CD4-positive, alpha-beta T cell (primary cell): ENCODE measurements at regions of chrX and their contacts with region 1.

Region 1: DNA sequence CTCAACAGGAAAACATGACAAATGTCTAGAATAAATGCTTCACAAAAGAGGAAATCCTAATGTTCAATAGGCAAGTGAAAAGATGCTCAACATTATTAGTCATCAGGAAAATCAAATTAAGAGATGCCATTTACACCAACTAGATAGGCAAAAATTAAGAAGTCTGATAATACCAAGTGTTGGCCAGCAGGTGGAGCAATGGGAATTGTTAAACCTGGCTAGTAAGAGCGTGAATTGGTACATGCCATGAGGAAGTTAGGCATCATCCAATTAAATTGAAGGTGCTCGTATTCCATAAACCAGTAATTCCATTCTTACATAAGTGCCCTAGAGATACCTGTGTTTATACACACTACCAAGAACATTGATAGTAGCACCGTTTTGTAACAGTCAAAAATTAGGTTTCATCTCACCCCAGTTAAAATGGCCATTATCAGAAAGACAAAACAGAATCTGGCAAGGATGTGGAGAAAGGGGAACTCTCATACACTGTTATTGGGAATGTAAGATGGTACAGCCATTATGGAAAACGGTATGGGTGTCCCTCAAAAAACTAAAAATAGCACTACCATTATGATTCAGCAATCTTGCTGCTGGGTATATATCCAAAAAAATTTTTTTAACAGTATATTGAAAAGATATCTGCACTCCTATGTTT is 14.0 kb upstream of the ZCCHC18 start:
- DNase-seq: peak in 12 of 14 experiments; percentile 9 to 83 (median 34)
- ATAC-seq: peak; percentile 69
- H3K4me3 ChIP-seq: no peak overlapping the region
- H3K4me3 Mint-ChIP-seq: no peak overlapping the region
- H3K27ac ChIP-seq: no peak overlapping the region
- H3K27ac Mint-ChIP-seq: no peak overlapping the region
- H3K4me1 ChIP-seq: no peaks in the 10 kb centered on the region
- H3K4me1 Mint-ChIP-seq: peaks cover 4% of the 10 kb centered on the region
- H3K27me3 ChIP-seq: no peaks in the 10 kb centered on the region
- H3K27me3 Mint-ChIP-seq: peaks cover 5% of the 10 kb centered on the region
- CTCF ChIP-seq: peak; percentile 64

Region 2: GRCh38 chrX:103607364-103608305 is 490.6 kb before region 1 on chrX and contains the start of gene TCEAL3:
- CTCF ChIA-PET with region 1: no interaction called
- POLR2A ChIA-PET with region 1: no interaction called
- intact Hi-C with region 1: no loop called
- DNase-seq: peak in 9 of 14 experiments; percentile 8 to 72 (median 37)
- ATAC-seq: peak; percentile 71
- H3K4me3 ChIP-seq: peak within 1 kb of the TSS; percentile 77
- H3K4me3 Mint-ChIP-seq: peak within 1 kb of the TSS; percentile 87
- H3K27ac ChIP-seq: peak within 1 kb of the TSS in 1 of 2 donors; percentile 40
- H3K27ac Mint-ChIP-seq: peak within 1 kb of the TSS; percentile 69
- H3K4me1 ChIP-seq: peaks cover 10% of the 10 kb centered on the region
- H3K4me1 Mint-ChIP-seq: peaks cover 9% of the 10 kb centered on the region
- H3K27me3 ChIP-seq: no peaks in the 10 kb centered on the region
- H3K27me3 Mint-ChIP-seq: no peaks in the 10 kb centered on the region
- CTCF ChIP-seq: no peak
- total RNA-seq, gene TCEAL3: 5.0 to 5.8 TPM

Region 3: GRCh38 chrX:104113222-104113965 is 15.1 kb after region 1 on chrX:
- CTCF ChIA-PET with region 1: interaction called, 14 read pairs
- POLR2A ChIA-PET with region 1: interaction called, 6 read pairs
- intact Hi-C with region 1: loop called in 1 of 2 experiments (anchors 1 kb)
- DNase-seq: peak in 13 of 14 experiments; percentile 34 to 77 (median 47)
- ATAC-seq: peak; percentile 69
- H3K4me3 ChIP-seq: peak overlapping the region; percentile 72
- H3K4me3 Mint-ChIP-seq: peak overlapping the region; percentile 92
- H3K27ac ChIP-seq: no peak overlapping the region
- H3K27ac Mint-ChIP-seq: peak overlapping the region; percentile 89
- H3K4me1 ChIP-seq: peaks cover 42% of the 10 kb centered on the region
- H3K4me1 Mint-ChIP-seq: peaks cover 37% of the 10 kb centered on the region
- H3K27me3 ChIP-seq: no peaks in the 10 kb centered on the region
- H3K27me3 Mint-ChIP-seq: no peaks in the 10 kb centered on the region
- CTCF ChIP-seq: peak; percentile 37

Region 4: DNA sequence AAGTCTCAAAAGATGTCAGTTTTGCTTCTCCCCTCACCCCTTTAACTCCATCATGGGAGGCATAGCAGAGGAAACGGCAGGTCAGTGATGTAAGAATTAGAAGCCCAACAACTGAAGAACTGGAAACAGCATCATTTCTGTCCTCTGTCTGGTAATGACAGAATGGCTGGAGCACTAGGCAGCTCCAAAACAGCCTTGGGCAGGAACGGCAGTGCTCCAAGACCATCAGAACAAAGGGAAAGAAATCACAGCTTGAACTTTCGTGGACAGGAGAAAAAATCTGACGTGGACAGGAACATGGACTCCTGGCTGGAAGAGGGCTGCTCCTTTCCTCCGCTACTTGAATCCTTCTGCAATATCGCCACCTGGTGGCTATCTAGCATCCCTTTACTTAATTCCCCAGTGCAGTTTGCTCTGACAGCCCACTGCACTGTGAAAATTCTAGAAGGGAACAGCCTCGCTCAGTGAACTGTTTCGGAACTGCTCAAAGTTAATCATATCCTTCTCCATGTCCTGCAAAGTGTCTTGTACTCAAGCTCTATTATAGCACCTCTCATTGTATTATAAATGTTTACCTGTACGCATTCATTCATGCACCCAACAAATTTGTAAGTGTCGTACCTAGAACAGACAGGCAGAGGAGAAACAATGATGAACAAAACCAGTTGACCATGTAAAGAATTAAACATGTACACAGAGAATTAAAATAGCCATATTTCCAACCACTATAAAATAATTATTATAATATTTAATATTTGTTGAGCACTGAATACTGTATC is 38.1 kb after region 1 on chrX:
- CTCF ChIA-PET with region 1: no interaction called
- POLR2A ChIA-PET with region 1: interaction called, 4 read pairs
- intact Hi-C with region 1: loop called (anchors 1 kb)
- DNase-seq: peak in 13 of 14 experiments; percentile 24 to 81 (median 40)
- ATAC-seq: peak; percentile 78
- H3K4me3 ChIP-seq: no peak overlapping the region
- H3K4me3 Mint-ChIP-seq: no peak overlapping the region
- H3K27ac ChIP-seq: no peak overlapping the region
- H3K27ac Mint-ChIP-seq: no peak overlapping the region
- H3K4me1 ChIP-seq: peaks cover 10% of the 10 kb centered on the region
- H3K4me1 Mint-ChIP-seq: peaks cover 24% of the 10 kb centered on the region
- H3K27me3 ChIP-seq: no peaks in the 10 kb centered on the region
- H3K27me3 Mint-ChIP-seq: no peaks in the 10 kb centered on the region
- CTCF ChIP-seq: peak; percentile 75

Region 5: DNA sequence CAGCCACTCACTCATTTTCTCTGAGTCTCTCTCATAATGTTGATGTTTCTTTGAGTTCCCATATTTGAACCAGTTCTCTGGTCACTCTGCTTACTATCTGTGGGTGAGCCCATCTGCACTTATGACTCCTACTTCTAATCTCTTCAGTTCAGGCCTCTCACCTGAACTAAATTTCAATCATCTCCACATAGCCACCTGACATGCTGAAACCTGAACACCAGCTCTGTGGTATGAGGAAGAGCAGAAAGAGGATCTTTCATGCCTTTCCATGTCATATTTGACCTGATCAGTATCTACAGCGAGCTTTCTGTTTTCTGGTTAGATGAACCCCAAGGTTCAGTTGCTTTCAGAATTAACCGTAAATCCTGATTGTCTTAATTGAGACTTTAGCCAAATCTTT is 278.7 kb after region 1 on chrX:
- CTCF ChIA-PET with region 1: no interaction called
- POLR2A ChIA-PET with region 1: no interaction called
- intact Hi-C with region 1: no loop called
- DNase-seq: no peak
- ATAC-seq: no peak
- H3K4me3 ChIP-seq: no peak overlapping the region
- H3K4me3 Mint-ChIP-seq: no peak overlapping the region
- H3K27ac ChIP-seq: no peak overlapping the region
- H3K27ac Mint-ChIP-seq: no peak overlapping the region
- H3K4me1 ChIP-seq: no peaks in the 10 kb centered on the region
- H3K4me1 Mint-ChIP-seq: no peaks in the 10 kb centered on the region
- H3K27me3 ChIP-seq: no peaks in the 10 kb centered on the region
- H3K27me3 Mint-ChIP-seq: no peaks in the 10 kb centered on the region
- CTCF ChIP-seq: no peak